Naive thymus-derived CD4-positive, alpha-beta T cell (primary cell): ENCODE measurements at regions of chr2 and their contacts with region 1.

Region 1: DNA sequence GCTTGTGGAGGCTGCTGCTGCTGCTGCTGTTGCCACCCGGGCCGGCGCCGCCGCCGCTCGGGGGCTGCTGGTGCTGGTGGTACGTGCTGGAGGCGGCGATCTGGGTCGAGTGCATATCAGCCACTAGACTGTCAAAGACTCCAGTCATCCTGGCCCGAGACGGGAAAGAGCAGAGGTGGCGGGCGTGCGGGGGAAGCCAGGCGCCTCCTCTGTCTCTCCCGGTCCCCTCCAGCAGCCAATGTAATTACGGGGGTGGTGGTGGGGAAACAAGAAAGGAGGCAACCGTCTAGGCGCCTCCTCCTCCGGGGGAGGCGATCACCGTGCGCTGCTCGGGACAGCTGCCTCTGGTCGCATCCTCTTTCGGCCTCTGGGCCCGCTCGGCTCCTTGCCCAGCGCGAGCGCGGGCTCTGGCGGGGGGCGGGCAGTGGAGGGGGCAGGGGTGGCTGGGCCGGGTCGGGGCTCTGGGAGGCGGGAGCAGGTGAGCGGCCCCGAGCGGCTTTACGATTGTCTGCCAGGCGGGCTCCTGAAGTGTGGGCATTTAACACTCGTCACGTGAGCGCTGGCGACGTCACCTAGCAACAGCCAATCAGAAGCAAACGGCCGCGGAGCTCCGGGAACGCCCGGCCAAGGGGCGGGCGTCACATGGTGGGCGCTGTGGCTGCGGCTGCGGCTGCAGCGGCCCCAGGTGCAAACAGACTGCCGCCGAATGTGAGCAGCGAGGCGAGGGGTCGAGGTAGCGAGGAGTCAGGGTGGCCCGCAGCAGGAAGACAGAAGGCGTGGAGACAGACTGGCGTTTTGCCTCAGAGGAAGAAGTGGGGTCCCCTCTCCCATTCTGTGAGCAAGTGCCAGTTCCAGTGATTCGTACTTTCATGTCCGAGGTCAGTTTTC is at the start of gene DLX2:
- DNase-seq: peak in 5 of 9 donors; percentile 23 to 43 (median 32)
- ATAC-seq: peak; percentile 61
- H3K4me3 ChIP-seq: peak within 1 kb of the TSS; percentile 32
- H3K4me3 Mint-ChIP-seq: peak within 1 kb of the TSS; percentile 74 to 88 (median 82)
- H3K27ac ChIP-seq: no peak within 1 kb of the TSS
- H3K27ac Mint-ChIP-seq: peak within 1 kb of the TSS in 8 of 9 donors; percentile 11 to 89 (median 80)
- H3K4me1 ChIP-seq: peaks cover 41 to 62% of the 10 kb centered on the region in 2 donors
- H3K4me1 Mint-ChIP-seq: peaks cover 29 to 59% (median 49%) of the 10 kb centered on the region in 7 donors
- H3K27me3 ChIP-seq: peaks cover 48 to 83% of the 10 kb centered on the region in 2 donors
- H3K27me3 Mint-ChIP-seq: peaks cover 65 to 91% (median 70%) of the 10 kb centered on the region in 5 donors
- total RNA-seq, gene DLX2: 0.16 to 0.34 TPM in 2 of 5 experiments, not detected in the others

Region 2: GRCh38 chr2:170715062-170715931 is 1387.3 kb before region 1 on chr2 and contains the start of gene SP5:
- CTCF ChIA-PET with region 1: no interaction called
- POLR2A ChIA-PET with region 1: no interaction called
- intact Hi-C with region 1: loop called in 1 of 2 experiments (anchors 5 kb)
- DNase-seq: peak; percentile 25 to 63 (median 52)
- ATAC-seq: peak; percentile 44
- H3K4me3 ChIP-seq: peak within 1 kb of the TSS; percentile 64
- H3K4me3 Mint-ChIP-seq: peak within 1 kb of the TSS; percentile 81 to 99 (median 93)
- H3K27ac ChIP-seq: no peak within 1 kb of the TSS
- H3K27ac Mint-ChIP-seq: peak within 1 kb of the TSS in 5 of 9 donors; percentile 47 to 76 (median 52)
- H3K4me1 ChIP-seq: peaks cover 0 to 39% of the 10 kb centered on the region in 2 donors
- H3K4me1 Mint-ChIP-seq: peaks cover 18 to 50% (median 34%) of the 10 kb centered on the region in 7 donors
- H3K27me3 ChIP-seq: peaks cover 11 to 41% of the 10 kb centered on the region in 2 donors
- H3K27me3 Mint-ChIP-seq: peaks cover 67 to 74% (median 69%) of the 10 kb centered on the region in 5 donors
- total RNA-seq, gene SP5: not detected

Region 3: DNA sequence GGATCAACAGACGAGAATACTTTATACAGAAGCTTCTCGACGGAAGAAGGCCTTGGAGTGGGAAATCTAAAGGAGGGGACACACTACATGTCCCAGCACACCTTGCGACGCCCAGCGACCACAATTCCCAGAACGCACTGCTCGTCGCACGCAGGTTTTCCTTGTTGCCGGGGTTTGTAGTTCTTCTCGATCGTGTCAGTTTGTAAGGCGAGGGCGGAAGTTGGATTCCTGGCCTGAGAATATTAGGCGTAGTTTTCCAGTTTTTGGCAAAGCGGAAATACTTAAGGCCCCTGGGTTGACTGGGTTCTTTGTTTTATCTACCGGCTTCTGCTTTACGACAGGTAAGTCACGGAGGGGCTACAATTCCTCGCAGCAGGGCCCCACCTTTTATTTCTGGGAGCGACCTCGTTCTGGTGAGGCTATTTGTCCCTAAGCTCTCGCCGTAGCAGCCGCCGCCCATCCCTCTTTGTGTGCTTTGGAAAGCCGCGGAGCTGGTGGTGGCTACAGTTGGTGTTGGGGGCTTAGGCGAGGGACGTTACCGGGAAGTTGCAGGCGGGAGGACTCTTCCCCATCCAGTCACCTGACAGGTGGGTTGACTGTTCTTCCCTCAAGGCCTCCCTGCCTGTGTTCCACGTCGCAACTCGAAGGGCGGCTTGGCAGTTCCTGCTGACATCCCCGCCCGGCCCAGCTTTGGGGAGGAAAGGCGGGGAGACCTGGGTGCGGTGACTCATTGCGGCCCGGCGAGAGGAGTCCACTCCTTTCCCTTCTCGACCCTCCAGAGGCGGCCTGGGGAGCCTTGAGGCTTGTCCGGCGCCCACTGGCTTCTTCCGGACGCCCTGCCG is 415.1 kb before region 1 on chr2 and contains the start of gene DYNC1I2:
- CTCF ChIA-PET with region 1: no interaction called
- POLR2A ChIA-PET with region 1: no interaction called
- intact Hi-C with region 1: loop called in 1 of 2 experiments (anchors 5 kb)
- DNase-seq: peak; percentile 38 to 82 (median 79)
- ATAC-seq: peak; percentile 90
- H3K4me3 ChIP-seq: peak within 1 kb of the TSS; percentile 96
- H3K4me3 Mint-ChIP-seq: peak within 1 kb of the TSS; percentile 89 to 98 (median 93)
- H3K27ac ChIP-seq: peak within 1 kb of the TSS; percentile 67
- H3K27ac Mint-ChIP-seq: peak within 1 kb of the TSS; percentile 77 to 95 (median 85)
- H3K4me1 ChIP-seq: peaks cover 7 to 10% of the 10 kb centered on the region in 2 donors
- H3K4me1 Mint-ChIP-seq: peaks cover 11 to 43% (median 24%) of the 10 kb centered on the region in 7 donors
- H3K27me3 ChIP-seq: no peaks in the 10 kb centered on the region
- H3K27me3 Mint-ChIP-seq: peaks cover 0 to 21% (median 0%) of the 10 kb centered on the region in 5 donors
- total RNA-seq, gene DYNC1I2: 21.5 to 57.0 (median 41.7) TPM

Region 4: GRCh38 chr2:171893824-171894611 is 208.6 kb before region 1 on chr2 and contains the start of gene SLC25A12:
- CTCF ChIA-PET with region 1: no interaction called
- POLR2A ChIA-PET with region 1: no interaction called
- intact Hi-C with region 1: loop called in 1 of 2 experiments (anchors 10 kb)
- DNase-seq: peak; percentile 53 to 79 (median 65)
- ATAC-seq: peak; percentile 96
- H3K4me3 ChIP-seq: peak within 1 kb of the TSS; percentile 93
- H3K4me3 Mint-ChIP-seq: peak within 1 kb of the TSS; percentile 93 to 98 (median 96)
- H3K27ac ChIP-seq: peak within 1 kb of the TSS; percentile 83
- H3K27ac Mint-ChIP-seq: peak within 1 kb of the TSS; percentile 66 to 94 (median 89)
- H3K4me1 ChIP-seq: peaks cover 11 to 17% of the 10 kb centered on the region in 2 donors
- H3K4me1 Mint-ChIP-seq: peaks cover 31 to 61% (median 52%) of the 10 kb centered on the region in 7 donors
- H3K27me3 ChIP-seq: no peaks in the 10 kb centered on the region
- H3K27me3 Mint-ChIP-seq: peaks cover 0 to 6% (median 0%) of the 10 kb centered on the region in 5 donors
- total RNA-seq, gene SLC25A12: 12.7 to 33.6 (median 14.0) TPM

Region 5: GRCh38 chr2:171957061-171957460 is 145.6 kb before region 1 on chr2:
- CTCF ChIA-PET with region 1: no interaction called
- POLR2A ChIA-PET with region 1: no interaction called
- intact Hi-C with region 1: loop called in 1 of 2 experiments (anchors 2 kb)
- DNase-seq: no peak
- ATAC-seq: no peak
- H3K4me3 ChIP-seq: no peak overlapping the region
- H3K4me3 Mint-ChIP-seq: no peak overlapping the region
- H3K27ac ChIP-seq: no peak overlapping the region
- H3K27ac Mint-ChIP-seq: peak overlapping the region in 1 of 9 donors; percentile 19
- H3K4me1 ChIP-seq: peaks cover 6 to 8% of the 10 kb centered on the region in 2 donors
- H3K4me1 Mint-ChIP-seq: peaks cover 15 to 43% (median 26%) of the 10 kb centered on the region in 7 donors
- H3K27me3 ChIP-seq: no peaks in the 10 kb centered on the region
- H3K27me3 Mint-ChIP-seq: no peaks in the 10 kb centered on the region

Region 6: DNA sequence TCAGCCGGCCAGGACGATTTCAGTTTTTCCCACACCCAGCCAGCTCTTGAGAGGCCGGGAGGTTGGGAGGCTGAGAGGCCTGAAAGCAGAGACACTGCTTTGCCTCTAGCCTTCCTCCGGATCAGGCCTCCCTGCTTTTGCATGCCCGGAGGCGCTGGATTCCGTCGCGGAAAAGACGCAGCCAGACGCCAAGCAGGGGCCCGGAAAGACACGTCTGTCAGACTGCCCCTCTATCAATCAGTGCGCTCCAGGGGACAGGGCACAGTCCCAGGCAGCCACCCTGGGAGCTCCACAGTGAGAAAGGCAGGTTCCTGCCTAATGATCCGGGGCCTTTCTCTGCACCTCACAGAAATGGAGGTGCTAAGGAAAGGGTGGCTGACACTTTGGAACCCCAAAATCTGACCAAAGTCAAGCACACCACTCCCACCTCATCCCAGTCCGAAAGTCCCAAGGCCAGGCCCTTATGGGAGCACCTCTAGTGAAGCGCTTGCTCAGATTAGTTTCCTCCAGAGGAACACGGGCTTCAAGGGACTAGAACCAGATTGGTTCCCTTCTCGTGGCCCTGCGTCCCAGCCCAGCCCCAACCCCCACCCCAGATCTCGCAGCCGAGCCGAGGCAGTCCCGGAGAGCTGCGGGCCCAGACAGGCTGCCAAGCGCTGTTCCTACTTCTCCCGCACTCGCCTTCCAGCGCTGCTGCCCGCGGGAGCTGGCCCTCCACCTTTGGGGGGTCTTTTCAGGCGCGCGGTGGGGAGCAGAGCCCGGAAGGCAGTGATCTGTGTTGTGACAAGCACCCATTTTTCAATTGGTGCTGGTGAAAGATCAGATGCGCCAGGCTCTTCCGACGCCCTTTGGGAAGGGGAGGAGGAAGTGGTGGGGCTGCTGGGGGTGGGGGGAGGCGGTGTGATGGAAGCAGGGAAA is 12.3 kb before region 1 on chr2:
- CTCF ChIA-PET with region 1: interaction called, 5 read pairs
- POLR2A ChIA-PET with region 1: interaction called, 12 read pairs
- intact Hi-C with region 1: loop called (anchors 1 kb)
- DNase-seq: peak in 3 of 9 donors; percentile 15 to 32 (median 22)
- ATAC-seq: no peak
- H3K4me3 ChIP-seq: no peak overlapping the region
- H3K4me3 Mint-ChIP-seq: peak overlapping the region in 3 of 10 donors; percentile 29 to 44 (median 34)
- H3K27ac ChIP-seq: no peak overlapping the region
- H3K27ac Mint-ChIP-seq: peak overlapping the region in 8 of 9 donors; percentile 2 to 91 (median 40)
- H3K4me1 ChIP-seq: peaks cover 33 to 36% of the 10 kb centered on the region in 2 donors
- H3K4me1 Mint-ChIP-seq: peaks cover 16 to 56% (median 43%) of the 10 kb centered on the region in 7 donors
- H3K27me3 ChIP-seq: peaks cover 62 to 94% of the 10 kb centered on the region in 2 donors
- H3K27me3 Mint-ChIP-seq: peaks cover 83 to 92% (median 86%) of the 10 kb centered on the region in 5 donors